ENCODE measurements at regions of chr1 and their contacts with region 1.

Region 1: DNA sequence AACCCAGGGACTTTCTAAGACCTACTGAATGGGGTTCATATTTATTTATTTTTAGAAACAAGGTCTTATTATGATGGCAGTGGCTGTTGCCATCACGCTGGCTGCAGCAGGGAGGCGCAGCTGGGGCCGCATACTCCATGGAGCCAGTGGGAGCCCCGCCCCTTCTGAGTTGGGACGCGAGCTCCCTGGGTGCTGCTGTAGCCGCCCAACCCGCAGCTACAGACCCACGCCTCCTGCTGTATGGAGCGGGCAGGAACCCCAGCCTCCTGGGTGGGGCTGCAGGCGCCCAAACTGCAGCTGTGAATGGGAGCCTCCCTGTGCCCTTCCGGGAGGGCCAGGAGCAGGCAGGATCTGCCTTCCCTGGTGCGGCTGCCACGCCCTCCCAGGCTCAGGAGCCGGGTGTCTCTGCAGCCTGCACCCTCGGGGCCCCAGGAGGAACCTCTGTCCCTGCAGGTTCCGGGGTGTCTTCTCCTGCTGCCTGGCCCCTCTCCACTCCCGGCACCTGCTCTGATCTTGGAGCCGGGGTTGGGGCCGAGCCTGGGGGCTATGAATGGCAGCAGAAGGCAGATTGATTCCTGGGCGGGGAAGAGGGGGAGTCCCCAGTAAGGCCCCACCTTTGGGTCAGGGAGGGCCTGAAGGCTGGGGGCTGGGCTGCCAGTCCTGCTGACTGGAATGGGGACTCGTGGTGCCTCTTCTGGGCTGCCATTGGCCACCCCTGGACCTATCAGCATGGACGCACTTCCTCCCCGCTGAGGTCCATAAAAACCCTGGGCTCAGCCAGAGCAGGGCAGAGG is 66.6 kb upstream of the LRRN2 start:
- DNase-seq: no peak
- ATAC-seq: no peak
- H3K4me3 ChIP-seq: no peak overlapping the region
- H3K27ac ChIP-seq: no peak overlapping the region
- H3K4me1 ChIP-seq: no peaks in the 10 kb centered on the region
- H3K27me3 ChIP-seq: peaks cover 13% of the 10 kb centered on the region
- CTCF ChIP-seq: no peak

Region 2: GRCh38 chr1:204709960-204710912 is 41.9 kb before region 1 on chr1:
- intact Hi-C with region 1: loop called (anchors 2 kb)
- DNase-seq: no peak
- ATAC-seq: no peak
- H3K4me3 ChIP-seq: no peak overlapping the region
- H3K27ac ChIP-seq: no peak overlapping the region
- H3K4me1 ChIP-seq: no peaks in the 10 kb centered on the region
- H3K27me3 ChIP-seq: peaks cover 46% of the 10 kb centered on the region
- CTCF ChIP-seq: no peak

Region 3: GRCh38 chr1:205162301-205162700 is 410.2 kb after region 1 on chr1:
- intact Hi-C with region 1: no loop called
- DNase-seq: no peak
- ATAC-seq: no peak
- H3K4me3 ChIP-seq: no peak overlapping the region
- H3K27ac ChIP-seq: no peak overlapping the region
- H3K4me1 ChIP-seq: no peaks in the 10 kb centered on the region
- H3K27me3 ChIP-seq: no peaks in the 10 kb centered on the region
- CTCF ChIP-seq: no peak